Activated CD4-positive, alpha-beta memory T cell treated with anti-CD3 and anti-CD28 coated beads for 36 hours (primary cell): ENCODE measurements at regions of chr7 and their contacts with region 1.

Region 1: DNA sequence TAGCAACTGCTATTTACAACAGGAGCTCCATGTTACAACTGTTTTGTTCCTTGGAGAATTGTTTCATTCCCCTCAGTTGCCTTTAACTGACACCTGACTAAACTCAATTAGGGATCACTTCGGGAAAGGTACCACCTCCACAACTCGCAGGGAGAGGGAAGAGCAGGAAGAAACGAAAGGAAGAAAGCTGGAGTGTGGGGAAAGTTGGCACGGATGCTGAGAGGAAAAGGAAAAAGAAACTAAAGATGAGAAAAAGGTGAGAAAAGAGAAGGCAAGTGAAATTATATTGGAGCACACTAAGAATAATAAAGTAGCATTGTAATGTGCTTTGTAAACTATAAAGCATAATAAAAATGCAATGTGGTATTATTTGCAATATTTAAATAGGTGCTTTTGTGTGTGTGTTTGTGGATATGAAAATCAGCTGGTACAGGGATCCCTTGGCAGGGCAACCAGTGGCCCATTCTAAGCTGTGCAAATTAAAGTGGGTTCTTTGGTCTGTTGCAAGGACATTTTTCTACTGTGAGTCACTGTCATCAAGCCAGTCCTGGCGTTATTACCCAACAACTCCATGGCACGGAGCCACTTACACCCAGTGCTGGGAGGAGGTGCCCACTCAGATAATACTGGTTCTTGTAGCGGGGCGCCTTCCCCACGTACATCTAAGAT is 45.9 kb downstream of the HIPK2 start:
- DNase-seq: no peak
- H3K4me3 Mint-ChIP-seq: no peak overlapping the region
- H3K27ac Mint-ChIP-seq: no peak overlapping the region
- H3K4me1 Mint-ChIP-seq: peaks cover 42% of the 10 kb centered on the region
- H3K27me3 Mint-ChIP-seq: no peaks in the 10 kb centered on the region

Region 2: GRCh38 chr7:139515266-139515665 is 216.7 kb before region 1 on chr7:
- CTCF ChIA-PET with region 1: no interaction called
- POLR2A ChIA-PET with region 1: no interaction called
- intact Hi-C with region 1: no loop called
- DNase-seq: no peak
- H3K4me3 Mint-ChIP-seq: no peak overlapping the region
- H3K27ac Mint-ChIP-seq: no peak overlapping the region
- H3K4me1 Mint-ChIP-seq: no peaks in the 10 kb centered on the region
- H3K27me3 Mint-ChIP-seq: no peaks in the 10 kb centered on the region

Region 3: GRCh38 chr7:139660317-139661042 is 71.5 kb before region 1 on chr7:
- CTCF ChIA-PET with region 1: no interaction called
- POLR2A ChIA-PET with region 1: no interaction called
- intact Hi-C with region 1: no loop called
- DNase-seq: no peak
- H3K4me3 Mint-ChIP-seq: no peak overlapping the region
- H3K27ac Mint-ChIP-seq: no peak overlapping the region
- H3K4me1 Mint-ChIP-seq: peaks cover 9% of the 10 kb centered on the region
- H3K27me3 Mint-ChIP-seq: no peaks in the 10 kb centered on the region

Region 4: DNA sequence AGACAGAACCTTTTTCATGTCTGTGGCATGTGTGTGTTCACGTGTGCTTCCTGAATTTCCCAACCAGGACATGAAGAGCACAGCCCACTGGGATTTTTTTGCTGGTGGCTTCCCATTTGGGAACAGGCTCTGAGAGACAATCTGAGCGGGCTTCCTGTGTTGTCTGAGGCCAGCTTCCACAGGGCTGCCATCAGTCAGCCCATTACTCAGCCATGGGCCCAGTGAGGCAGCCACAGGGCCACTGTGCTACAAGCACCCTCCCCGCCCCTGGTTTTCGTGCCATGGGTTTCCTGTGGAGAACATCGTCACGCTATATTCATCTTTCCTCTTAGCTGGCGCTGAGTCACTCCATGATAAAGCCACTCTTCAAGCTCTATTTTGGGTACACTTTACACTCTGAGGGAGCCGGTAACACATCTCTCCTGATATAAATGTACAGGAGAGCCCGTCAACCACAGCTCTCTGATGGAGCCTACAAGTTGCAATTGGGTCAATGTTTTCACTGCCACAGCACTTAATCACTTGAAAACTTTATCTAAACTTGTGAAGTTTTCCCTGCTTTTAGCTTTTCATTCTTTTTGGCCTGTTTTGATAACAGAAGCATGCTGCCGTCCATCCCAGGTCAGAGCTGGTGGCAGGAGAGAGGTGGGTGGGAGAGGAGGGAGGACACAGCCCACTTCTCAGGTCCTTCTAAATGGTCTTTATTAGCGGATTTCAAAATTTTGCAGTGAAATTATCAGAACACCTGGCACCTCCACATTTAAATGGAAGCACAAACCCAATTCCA is 51.1 kb before region 1 on chr7:
- CTCF ChIA-PET with region 1: no interaction called
- POLR2A ChIA-PET with region 1: no interaction called
- intact Hi-C with region 1: loop called (anchors 5 kb)
- DNase-seq: peak; percentile 92
- H3K4me3 Mint-ChIP-seq: no peak overlapping the region
- H3K27ac Mint-ChIP-seq: peak overlapping the region; percentile 94
- H3K4me1 Mint-ChIP-seq: peaks cover 48% of the 10 kb centered on the region
- H3K27me3 Mint-ChIP-seq: no peaks in the 10 kb centered on the region

Region 5: GRCh38 chr7:139702811-139703486 is 29.0 kb before region 1 on chr7:
- CTCF ChIA-PET with region 1: no interaction called
- POLR2A ChIA-PET with region 1: no interaction called
- intact Hi-C with region 1: no loop called
- DNase-seq: no peak
- H3K4me3 Mint-ChIP-seq: no peak overlapping the region
- H3K27ac Mint-ChIP-seq: no peak overlapping the region
- H3K4me1 Mint-ChIP-seq: peaks cover 10% of the 10 kb centered on the region
- H3K27me3 Mint-ChIP-seq: no peaks in the 10 kb centered on the region